ENCODE measurements at regions of chr12 and their contacts with region 1.

Region 1: GRCh38 chr12:93514853-93515252 is 47.5 kb downstream of the MRPL42 start:
- DNase-seq: no peak
- ATAC-seq: no peak
- H3K4me3 Mint-ChIP-seq: no peak overlapping the region
- H3K27ac Mint-ChIP-seq: no peak overlapping the region
- H3K4me1 Mint-ChIP-seq: no peaks in the 10 kb centered on the region
- H3K27me3 Mint-ChIP-seq: no peaks in the 10 kb centered on the region
- CTCF ChIP-seq: no peak

Region 2: DNA sequence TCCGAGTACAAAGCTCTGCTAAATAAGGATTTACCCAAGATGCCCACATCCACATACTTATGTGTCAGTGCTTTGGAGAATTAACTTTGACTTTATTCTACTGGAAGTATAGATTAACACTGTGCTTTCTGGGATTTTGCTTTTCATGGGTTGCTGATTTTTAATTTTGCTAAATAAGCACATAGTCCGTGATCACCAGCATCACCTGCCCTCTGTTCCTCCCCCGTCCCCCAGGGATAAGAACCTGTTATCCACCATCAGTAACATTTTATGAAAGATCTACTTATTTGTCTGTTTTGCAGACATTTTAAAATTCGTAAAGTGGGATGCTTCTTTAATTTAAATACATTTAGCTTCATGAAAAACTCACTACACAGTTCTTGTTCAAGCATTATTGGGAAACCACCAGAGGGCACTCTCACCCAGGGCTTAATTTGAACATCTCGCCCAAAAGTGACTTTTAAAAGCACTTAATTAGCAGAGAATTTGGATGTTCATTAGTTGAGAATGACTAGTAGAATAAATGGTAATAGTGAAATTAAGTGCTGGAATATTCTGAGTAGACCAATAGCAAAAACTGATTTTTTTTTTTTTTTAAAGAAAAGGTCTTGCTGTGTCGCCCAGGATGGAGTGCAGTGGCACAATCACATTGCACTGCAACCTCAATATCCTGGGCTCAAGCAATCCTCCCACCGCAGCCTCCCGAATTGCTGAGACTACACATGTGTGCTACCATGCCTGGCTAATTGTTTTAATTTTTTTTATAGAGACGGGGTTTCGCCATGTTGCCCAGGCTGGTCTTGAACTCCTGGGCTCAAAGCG is 11.8 kb before region 1 on chr12:
- CTCF ChIA-PET with region 1: interaction called, 24 read pairs
- POLR2A ChIA-PET with region 1: no interaction called
- DNase-seq: peak; percentile 45
- ATAC-seq: no peak
- H3K4me3 Mint-ChIP-seq: no peak overlapping the region
- H3K27ac Mint-ChIP-seq: no peak overlapping the region
- H3K4me1 Mint-ChIP-seq: no peaks in the 10 kb centered on the region
- H3K27me3 Mint-ChIP-seq: no peaks in the 10 kb centered on the region
- CTCF ChIP-seq: peak; percentile 57